ENCODE measurements at regions of chr20 and their contacts with region 1.

Region 1: DNA sequence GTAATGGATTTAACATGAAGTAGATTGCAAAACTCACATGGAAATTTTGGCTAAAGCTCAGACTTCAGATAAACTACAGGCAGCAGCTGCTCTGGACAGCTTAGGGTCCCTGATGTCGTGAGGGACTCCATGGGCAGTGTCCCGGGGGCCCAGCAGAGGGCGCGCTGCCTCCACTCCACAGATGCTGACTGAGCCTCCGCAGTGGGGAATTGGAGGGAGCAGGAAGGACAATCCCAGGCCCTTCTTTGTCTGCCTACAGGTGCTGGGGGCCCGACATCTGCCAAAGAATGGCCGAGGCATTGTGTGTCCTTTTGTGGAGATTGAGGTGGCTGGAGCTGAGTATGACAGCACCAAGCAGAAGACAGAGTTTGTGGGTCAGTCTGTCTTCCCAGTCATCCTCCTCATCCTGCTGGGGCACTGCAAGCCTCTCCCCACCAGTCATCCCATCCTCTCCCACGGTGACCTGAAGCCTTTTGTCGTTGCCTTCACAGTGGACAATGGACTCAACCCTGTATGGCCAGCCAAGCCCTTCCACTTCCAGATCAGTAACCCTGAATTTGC is 35.9 kb downstream of the PLCG1 start:
- DNase-seq: no peak
- ATAC-seq: peak; percentile 97
- H3K4me3 ChIP-seq: no peak overlapping the region
- H3K27ac ChIP-seq: no peak overlapping the region
- H3K4me1 ChIP-seq: no peaks in the 10 kb centered on the region
- H3K27me3 ChIP-seq: no peaks in the 10 kb centered on the region
- CTCF ChIP-seq: peak; percentile 87 to 94 (median 92)
- EP300 ChIP-seq: no peak
- POLR2A ChIP-seq: no peak
- RAD21 ChIP-seq: peak; percentile 90

Region 2: DNA sequence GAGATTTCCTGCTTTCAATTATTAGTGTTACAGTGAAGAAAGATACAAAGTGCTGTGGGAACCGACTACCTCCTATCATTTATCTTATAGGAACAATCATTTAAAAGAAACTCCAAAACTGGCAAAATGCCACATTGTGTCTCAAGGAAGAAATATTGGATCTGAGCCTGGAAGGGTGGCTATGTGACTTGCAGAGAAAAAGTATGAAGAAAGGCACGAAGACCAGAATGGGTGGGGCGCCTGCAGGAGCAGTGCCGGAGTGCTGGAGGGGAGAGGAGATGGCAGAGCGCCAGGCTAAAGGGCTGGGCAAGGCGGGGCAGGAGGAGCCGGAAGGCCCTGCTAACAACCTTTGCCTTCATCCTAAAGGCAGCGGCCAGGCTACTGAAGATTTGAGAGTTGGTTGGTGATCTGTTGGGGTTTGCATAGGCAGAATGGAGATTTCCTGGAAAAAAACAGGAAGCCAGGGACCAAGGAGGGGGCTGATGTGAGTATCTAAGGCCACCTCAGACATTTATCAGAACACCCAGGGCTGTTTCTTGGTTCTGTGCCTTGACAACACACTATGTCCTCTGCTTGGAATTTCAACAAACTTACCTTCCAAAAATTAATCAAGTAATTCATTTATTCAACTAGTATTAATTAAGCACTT is 609.8 kb before region 1 on chr20:
- CTCF ChIA-PET with region 1: no interaction called
- POLR2A ChIA-PET with region 1: no interaction called
- RAD21 ChIA-PET with region 1: no interaction called
- SMC1A ChIA-PET with region 1: no interaction called
- in situ Hi-C with region 1: no loop called
- intact Hi-C with region 1: no loop called
- DNase-seq: no peak
- ATAC-seq: no peak
- H3K4me3 ChIP-seq: no peak overlapping the region
- H3K27ac ChIP-seq: no peak overlapping the region
- H3K4me1 ChIP-seq: no peaks in the 10 kb centered on the region
- H3K27me3 ChIP-seq: no peaks in the 10 kb centered on the region; a peak in 2 of 4 replicates
- CTCF ChIP-seq: no peak
- EP300 ChIP-seq: no peak
- POLR2A ChIP-seq: no peak
- RAD21 ChIP-seq: no peak

Region 3: DNA sequence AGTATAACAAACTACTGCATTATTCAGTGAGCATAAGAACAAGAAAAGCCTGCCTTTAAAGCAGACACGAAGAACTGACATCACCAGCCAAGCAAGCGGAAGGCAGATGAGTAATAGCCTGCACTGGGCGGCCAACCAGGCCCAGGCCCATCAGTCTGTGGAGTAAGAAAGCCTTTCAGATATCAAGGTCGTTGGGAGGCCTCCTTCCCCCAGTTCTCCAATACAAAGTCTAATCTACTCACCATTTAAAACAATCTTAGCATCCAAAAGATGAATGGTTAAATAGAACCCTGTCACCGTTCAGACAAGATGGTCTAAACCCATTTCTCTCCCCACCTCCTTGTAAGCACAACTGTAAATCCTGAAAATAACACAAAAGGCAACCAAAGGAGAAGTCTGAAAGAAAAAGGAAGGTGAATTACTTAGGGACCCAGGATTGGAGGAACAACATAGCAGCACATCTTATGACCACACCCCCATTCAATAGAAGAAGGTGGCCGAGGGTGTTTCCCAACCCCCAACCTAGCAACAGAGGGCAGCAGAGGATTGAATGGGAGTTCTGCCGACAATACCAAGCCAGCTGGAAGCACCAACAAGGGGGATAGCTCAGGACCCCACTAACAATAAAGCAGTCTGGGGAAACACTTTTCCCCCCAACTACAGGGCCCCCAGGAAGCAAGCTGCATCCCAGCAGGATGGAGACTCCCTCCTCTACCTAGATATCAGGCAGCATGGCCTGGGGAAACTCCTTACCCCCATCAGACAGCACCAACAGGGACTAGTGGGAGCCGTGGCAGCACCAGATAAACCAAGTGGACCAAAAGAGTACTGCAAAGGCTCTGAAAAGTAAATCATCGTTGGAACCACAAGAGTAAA is 76.4 kb after region 1 on chr20:
- CTCF ChIA-PET with region 1: interaction called, 11 read pairs
- POLR2A ChIA-PET with region 1: no interaction called
- RAD21 ChIA-PET with region 1: interaction called, 3 read pairs
- SMC1A ChIA-PET with region 1: interaction called, 5 read pairs
- in situ Hi-C with region 1: no loop called
- intact Hi-C with region 1: no loop called
- DNase-seq: no peak
- ATAC-seq: peak; percentile 84
- H3K4me3 ChIP-seq: no peak overlapping the region
- H3K27ac ChIP-seq: no peak overlapping the region
- H3K4me1 ChIP-seq: no peaks in the 10 kb centered on the region; the same call in 1 of the 2 replicates
- H3K27me3 ChIP-seq: no peaks in the 10 kb centered on the region
- CTCF ChIP-seq: peak; percentile 20 to 51 (median 20); a peak in 4 of 6 replicates
- EP300 ChIP-seq: no peak
- POLR2A ChIP-seq: no peak
- RAD21 ChIP-seq: peak; percentile 40; the same call in 1 of the 2 replicates

Region 4: DNA sequence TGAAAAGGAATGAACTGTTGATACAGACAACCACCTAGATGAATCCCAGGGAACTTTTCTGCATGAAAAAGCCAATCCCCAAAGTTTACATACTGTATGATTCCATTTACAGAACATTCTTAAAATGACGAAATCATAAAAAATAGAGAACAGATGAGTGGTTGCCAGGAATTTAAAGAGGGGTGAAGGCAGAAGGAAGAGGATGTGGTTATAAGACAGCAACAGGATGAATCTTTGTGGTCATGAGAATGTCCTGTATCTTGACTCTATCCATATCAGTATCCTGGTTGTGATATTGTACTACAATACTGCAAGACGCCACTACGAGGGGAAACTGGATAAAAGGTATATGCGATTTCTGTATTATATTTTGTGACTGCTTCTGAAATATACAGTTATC is 263.4 kb after region 1 on chr20:
- CTCF ChIA-PET with region 1: no interaction called
- POLR2A ChIA-PET with region 1: no interaction called
- RAD21 ChIA-PET with region 1: no interaction called
- SMC1A ChIA-PET with region 1: no interaction called
- in situ Hi-C with region 1: no loop called
- intact Hi-C with region 1: no loop called
- DNase-seq: no peak
- ATAC-seq: no peak
- H3K4me3 ChIP-seq: no peak overlapping the region
- H3K27ac ChIP-seq: no peak overlapping the region
- H3K4me1 ChIP-seq: peaks cover 9% of the 10 kb centered on the region
- H3K27me3 ChIP-seq: no peaks in the 10 kb centered on the region
- CTCF ChIP-seq: no peak
- EP300 ChIP-seq: no peak
- POLR2A ChIP-seq: no peak
- RAD21 ChIP-seq: no peak